ENCODE measurements at regions of chr3 and their contacts with region 1.

Region 1: GRCh38 chr3:52934630-52935530 is 37.5 kb upstream of the STIMATE start:
- DNase-seq: peak in 8 of 9 donors; percentile 30 to 58 (median 45)
- ATAC-seq: peak; percentile 97
- H3K4me3 ChIP-seq: no peak overlapping the region
- H3K4me3 Mint-ChIP-seq: peak overlapping the region in 4 of 10 donors; percentile 13 to 69 (median 27)
- H3K27ac ChIP-seq: no peak overlapping the region
- H3K27ac Mint-ChIP-seq: peak overlapping the region in 8 of 9 donors; percentile 7 to 75 (median 53)
- H3K4me1 ChIP-seq: peaks cover 0 to 4% of the 10 kb centered on the region in 2 donors
- H3K4me1 Mint-ChIP-seq: peaks cover 5 to 25% (median 16%) of the 10 kb centered on the region in 7 donors
- H3K27me3 ChIP-seq: no peaks in the 10 kb centered on the region
- H3K27me3 Mint-ChIP-seq: no peaks in the 10 kb centered on the region

Region 2: GRCh38 chr3:52742418-52743041 is 192.3 kb before region 1 on chr3:
- CTCF ChIA-PET with region 1: no interaction called
- POLR2A ChIA-PET with region 1: no interaction called
- intact Hi-C with region 1: loop called in 1 of 2 experiments (anchors 1 kb)
- DNase-seq: peak in 5 of 9 donors; percentile 18 to 35 (median 20)
- ATAC-seq: peak; percentile 50
- H3K4me3 ChIP-seq: no peak overlapping the region
- H3K4me3 Mint-ChIP-seq: no peak overlapping the region
- H3K27ac ChIP-seq: no peak overlapping the region
- H3K27ac Mint-ChIP-seq: no peak overlapping the region
- H3K4me1 ChIP-seq: no peaks in the 10 kb centered on the region
- H3K4me1 Mint-ChIP-seq: peaks cover 0 to 2% (median 0%) of the 10 kb centered on the region in 7 donors
- H3K27me3 ChIP-seq: no peaks in the 10 kb centered on the region
- H3K27me3 Mint-ChIP-seq: no peaks in the 10 kb centered on the region

Region 3: GRCh38 chr3:52845691-52846431 is 89.0 kb before region 1 on chr3:
- CTCF ChIA-PET with region 1: no interaction called
- POLR2A ChIA-PET with region 1: no interaction called
- intact Hi-C with region 1: loop called (anchors 2 to 5 kb)
- DNase-seq: peak in 3 of 9 donors; percentile 7 to 24 (median 14)
- ATAC-seq: peak; percentile 49
- H3K4me3 ChIP-seq: no peak overlapping the region
- H3K4me3 Mint-ChIP-seq: no peak overlapping the region
- H3K27ac ChIP-seq: no peak overlapping the region
- H3K27ac Mint-ChIP-seq: no peak overlapping the region
- H3K4me1 ChIP-seq: no peaks in the 10 kb centered on the region
- H3K4me1 Mint-ChIP-seq: peaks cover 0 to 10% (median 0%) of the 10 kb centered on the region in 7 donors
- H3K27me3 ChIP-seq: no peaks in the 10 kb centered on the region
- H3K27me3 Mint-ChIP-seq: no peaks in the 10 kb centered on the region

Region 4: GRCh38 chr3:52851348-52851747 is 83.5 kb before region 1 on chr3:
- CTCF ChIA-PET with region 1: no interaction called
- POLR2A ChIA-PET with region 1: no interaction called
- intact Hi-C with region 1: loop called in 1 of 2 experiments (anchors 5 kb)
- DNase-seq: peak in 5 of 9 donors; percentile 22 to 40 (median 35)
- ATAC-seq: peak; percentile 70
- H3K4me3 ChIP-seq: no peak overlapping the region
- H3K4me3 Mint-ChIP-seq: no peak overlapping the region
- H3K27ac ChIP-seq: no peak overlapping the region
- H3K27ac Mint-ChIP-seq: no peak overlapping the region
- H3K4me1 ChIP-seq: no peaks in the 10 kb centered on the region
- H3K4me1 Mint-ChIP-seq: no peaks in the 10 kb centered on the region
- H3K27me3 ChIP-seq: no peaks in the 10 kb centered on the region
- H3K27me3 Mint-ChIP-seq: no peaks in the 10 kb centered on the region

Region 5: GRCh38 chr3:53426918-53427317 is 492.0 kb after region 1 on chr3:
- CTCF ChIA-PET with region 1: no interaction called
- POLR2A ChIA-PET with region 1: no interaction called
- intact Hi-C with region 1: no loop called
- DNase-seq: no peak
- ATAC-seq: no peak
- H3K4me3 ChIP-seq: no peak overlapping the region
- H3K4me3 Mint-ChIP-seq: no peak overlapping the region
- H3K27ac ChIP-seq: no peak overlapping the region
- H3K27ac Mint-ChIP-seq: no peak overlapping the region
- H3K4me1 ChIP-seq: no peaks in the 10 kb centered on the region
- H3K4me1 Mint-ChIP-seq: no peaks in the 10 kb centered on the region
- H3K27me3 ChIP-seq: no peaks in the 10 kb centered on the region
- H3K27me3 Mint-ChIP-seq: peaks cover 5 to 23% (median 12%) of the 10 kb centered on the region in 5 donors